ENCODE measurements at regions of chr7 and their contacts with region 1.

Region 1: GRCh38 chr7:5629941-5630340 is 151.5 kb downstream of the RNF216 start:
- DNase-seq: peak; percentile 93

Region 2: GRCh38 chr7:5679813-5680473 is 50.0 kb after region 1 on chr7:
- in situ Hi-C with region 1: loop called (anchors 10 kb)
- DNase-seq: no peak